Activated CD8-positive, alpha-beta T cell treated with anti-CD3 and anti-CD28 coated beads, Interleukin-2, amount 10 ng/mL, durations not matched to agents 7 days and 5 days (primary cell): ENCODE measurements at regions of chr2 and their contacts with region 1.

Region 1: DNA sequence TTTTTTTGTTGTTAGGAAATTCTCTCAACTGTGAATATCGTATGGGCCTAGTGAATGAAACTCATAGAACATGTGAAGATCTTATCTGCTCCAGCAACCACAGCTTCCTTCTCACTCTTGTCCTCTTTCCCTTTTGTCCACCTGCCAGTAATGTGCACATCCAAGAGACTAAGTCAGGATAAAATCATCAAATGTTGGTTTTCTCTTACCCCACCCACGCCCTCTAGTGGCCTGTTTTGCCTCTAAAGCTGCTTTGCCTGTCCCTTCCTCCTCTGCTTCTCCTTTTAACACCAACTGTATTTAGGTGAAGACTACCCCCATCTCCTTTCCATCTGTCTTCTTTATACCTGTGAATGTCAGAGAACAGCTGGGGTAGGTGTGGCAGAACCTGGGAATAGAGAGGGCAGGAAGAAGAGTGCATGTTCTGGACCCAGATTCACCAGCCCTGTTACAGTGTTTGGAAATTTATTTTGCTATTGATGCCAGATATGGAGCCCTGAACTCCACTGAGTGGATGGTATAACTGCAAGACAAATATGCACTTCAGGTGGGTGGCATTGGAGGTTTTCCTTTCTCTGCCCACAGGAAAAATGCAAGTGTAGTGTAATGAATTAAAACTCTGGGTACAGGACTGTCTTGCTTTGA is 8.4 kb upstream of the MGAT5 start:
- DNase-seq: peak; percentile 88
- ATAC-seq: peak; percentile 63
- H3K4me3 Mint-ChIP-seq: peak overlapping the region; percentile 5
- H3K27ac Mint-ChIP-seq: peak overlapping the region; percentile 33
- H3K4me1 Mint-ChIP-seq: peaks cover 79% of the 10 kb centered on the region
- H3K27me3 Mint-ChIP-seq: no peaks in the 10 kb centered on the region

Region 2: GRCh38 chr2:134207564-134208209 is 37.8 kb before region 1 on chr2:
- CTCF ChIA-PET with region 1: interaction called, 27 read pairs
- POLR2A ChIA-PET with region 1: no interaction called
- DNase-seq: peak; percentile 68
- ATAC-seq: peak; percentile 90
- H3K4me3 Mint-ChIP-seq: no peak overlapping the region
- H3K27ac Mint-ChIP-seq: no peak overlapping the region
- H3K4me1 Mint-ChIP-seq: peaks cover 10% of the 10 kb centered on the region
- H3K27me3 Mint-ChIP-seq: no peaks in the 10 kb centered on the region

Region 3: DNA sequence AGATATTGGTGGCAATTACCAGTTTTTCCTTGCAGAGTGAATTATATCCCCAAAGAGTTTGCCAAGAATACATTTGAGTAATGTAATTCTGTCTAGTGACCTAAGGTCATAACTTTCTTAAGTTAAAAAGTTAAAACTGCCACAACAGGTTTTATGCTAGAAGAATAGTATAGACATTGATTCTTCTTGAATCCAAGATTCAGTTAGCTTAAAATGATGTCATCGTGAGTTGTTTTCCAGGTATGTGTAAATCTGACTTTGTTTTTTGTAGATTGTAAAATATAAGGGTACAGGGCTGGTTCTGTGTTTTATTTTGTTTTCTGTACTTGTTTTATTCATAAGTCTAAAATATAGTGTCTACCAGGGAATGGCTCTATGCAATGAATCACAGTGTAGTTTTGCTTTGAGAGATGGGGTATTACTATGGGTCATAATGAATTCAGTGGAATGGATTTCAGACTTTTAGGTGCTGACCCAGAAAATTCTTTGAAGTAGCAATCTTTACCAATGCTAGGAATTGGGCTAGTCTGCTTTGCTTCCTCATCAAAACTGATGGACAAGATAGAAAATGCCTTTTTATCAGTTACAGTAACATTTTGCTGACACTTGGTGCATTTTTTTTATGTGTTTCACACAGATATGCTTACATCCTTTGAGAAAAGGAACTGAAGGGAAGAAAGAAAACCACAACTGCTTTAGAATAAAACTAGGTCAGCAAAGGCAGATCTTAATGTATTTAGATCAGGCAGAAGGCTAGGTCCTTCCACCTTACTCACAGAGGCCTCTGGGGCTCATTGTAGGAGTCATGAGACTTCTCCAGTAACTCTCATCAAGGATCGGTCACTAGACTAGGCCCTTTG is 12.4 kb before region 1 on chr2:
- CTCF ChIA-PET with region 1: interaction called, 70 read pairs
- POLR2A ChIA-PET with region 1: interaction called, 3 read pairs
- DNase-seq: no peak
- ATAC-seq: peak; percentile 78
- H3K4me3 Mint-ChIP-seq: peak overlapping the region; percentile 37
- H3K27ac Mint-ChIP-seq: peak overlapping the region; percentile 84
- H3K4me1 Mint-ChIP-seq: peaks cover 69% of the 10 kb centered on the region
- H3K27me3 Mint-ChIP-seq: no peaks in the 10 kb centered on the region

Region 4: GRCh38 chr2:134282629-134283400 is 37.4 kb after region 1 on chr2:
- CTCF ChIA-PET with region 1: interaction called, 25 read pairs
- POLR2A ChIA-PET with region 1: no interaction called
- DNase-seq: peak; percentile 73
- ATAC-seq: peak; percentile 89
- H3K4me3 Mint-ChIP-seq: peak overlapping the region; percentile 62
- H3K27ac Mint-ChIP-seq: peak overlapping the region; percentile 88
- H3K4me1 Mint-ChIP-seq: peaks cover 44% of the 10 kb centered on the region
- H3K27me3 Mint-ChIP-seq: no peaks in the 10 kb centered on the region

Region 5: GRCh38 chr2:134320930-134321329 is 75.5 kb after region 1 on chr2:
- CTCF ChIA-PET with region 1: interaction called, 14 read pairs
- POLR2A ChIA-PET with region 1: no interaction called
- DNase-seq: peak; percentile 76
- ATAC-seq: peak; percentile 71
- H3K4me3 Mint-ChIP-seq: peak overlapping the region; percentile 46
- H3K27ac Mint-ChIP-seq: peak overlapping the region; percentile 79
- H3K4me1 Mint-ChIP-seq: peaks cover 89% of the 10 kb centered on the region
- H3K27me3 Mint-ChIP-seq: no peaks in the 10 kb centered on the region